SK-N-SH (cell line): ENCODE measurements at regions of chr14 and their contacts with region 1.

Region 1: GRCh38 chr14:24093901-24094761 is at the start of gene PCK2:
- DNase-seq: peak; percentile 97
- H3K4me3 ChIP-seq: peak within 1 kb of the TSS; percentile 80 to 92
- H3K27ac ChIP-seq: peak within 1 kb of the TSS; percentile 73 to 93
- H3K4me1 ChIP-seq: peaks cover 12 to 19% of the 10 kb centered on the region in 2 experiments; a peak in 2 of 4 replicates
- H3K27me3 ChIP-seq: no peaks in the 10 kb centered on the region
- CTCF ChIP-seq: 0 out of 2 replicates have a peak, but pooled peaks have one; percentile 6
- EP300 ChIP-seq: 0 out of 4 replicates have a peak, but pooled peaks of 1 of the 2 experiments have one; percentile 10
- RAD21 ChIP-seq: no peak
- polyA plus RNA-seq, gene PCK2: 16.2 and 16.6 TPM in 2 replicates

Region 2: GRCh38 chr14:24051789-24052655 is 42.1 kb before region 1 on chr14 and contains the start of gene CARMIL3:
- CTCF ChIA-PET with region 1: interaction called, 1,159 read pairs
- POLR2A ChIA-PET with region 1: interaction called, 44 read pairs
- DNase-seq: peak; percentile 97
- H3K4me3 ChIP-seq: peak within 1 kb of the TSS; percentile 72 to 80
- H3K27ac ChIP-seq: peak within 1 kb of the TSS in 1 of 2 experiments; percentile 81; a peak in 2 of 4 replicates
- H3K4me1 ChIP-seq: peaks cover 0 to 18% of the 10 kb centered on the region in 2 experiments; a peak in 1 of 4 replicates
- H3K27me3 ChIP-seq: no peaks in the 10 kb centered on the region; the same call in 1 of the 2 replicates
- CTCF ChIP-seq: no peak
- EP300 ChIP-seq: no peak
- RAD21 ChIP-seq: no peak
- polyA plus RNA-seq, gene CARMIL3: 0.32 and 0.43 TPM in 2 replicates

Region 3: DNA sequence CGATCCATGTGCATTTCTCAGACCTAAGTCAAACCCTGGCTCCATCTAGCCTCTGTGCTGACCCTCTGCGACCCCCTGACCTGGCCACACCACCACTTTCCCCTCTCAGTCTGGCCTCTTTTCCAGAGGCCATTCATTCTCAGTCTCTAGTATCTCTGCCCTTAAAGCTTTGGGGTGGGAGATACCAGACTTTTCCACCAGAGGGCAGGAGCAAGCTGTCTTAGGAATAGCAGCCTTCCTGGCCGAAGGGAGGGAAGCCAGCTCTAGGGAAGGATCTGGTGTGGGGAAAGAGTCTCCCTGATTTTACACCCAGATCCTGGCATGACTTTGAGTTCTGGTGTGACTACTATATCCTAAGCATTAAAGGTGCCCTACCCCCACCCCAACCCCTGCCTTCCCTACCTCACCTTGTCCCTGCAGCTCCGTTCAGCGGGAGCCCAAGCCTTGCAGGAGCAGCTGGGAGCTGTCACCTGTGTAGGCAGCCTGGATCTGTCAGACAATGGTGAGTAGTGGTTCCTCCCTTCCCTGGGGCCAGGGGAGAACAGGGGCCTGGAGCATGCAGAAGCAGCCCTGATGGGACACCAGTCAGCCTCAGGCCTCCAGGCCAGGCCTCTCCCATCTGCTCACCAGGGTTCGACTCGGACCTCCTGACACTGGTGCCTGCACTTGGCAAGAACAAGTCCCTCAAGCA is 35.7 kb before region 1 on chr14:
- CTCF ChIA-PET with region 1: interaction called, 1,159 read pairs
- POLR2A ChIA-PET with region 1: interaction called, 44 read pairs
- DNase-seq: peak; percentile 91
- H3K4me3 ChIP-seq: no peak overlapping the region; a peak in 1 of 4 replicates
- H3K27ac ChIP-seq: no peak overlapping the region
- H3K4me1 ChIP-seq: peaks cover 0 to 3% of the 10 kb centered on the region in 2 experiments; a peak in 1 of 4 replicates
- H3K27me3 ChIP-seq: no peaks in the 10 kb centered on the region
- CTCF ChIP-seq: peak; percentile 84
- EP300 ChIP-seq: no peak
- RAD21 ChIP-seq: peak; percentile 99

Region 4: DNA sequence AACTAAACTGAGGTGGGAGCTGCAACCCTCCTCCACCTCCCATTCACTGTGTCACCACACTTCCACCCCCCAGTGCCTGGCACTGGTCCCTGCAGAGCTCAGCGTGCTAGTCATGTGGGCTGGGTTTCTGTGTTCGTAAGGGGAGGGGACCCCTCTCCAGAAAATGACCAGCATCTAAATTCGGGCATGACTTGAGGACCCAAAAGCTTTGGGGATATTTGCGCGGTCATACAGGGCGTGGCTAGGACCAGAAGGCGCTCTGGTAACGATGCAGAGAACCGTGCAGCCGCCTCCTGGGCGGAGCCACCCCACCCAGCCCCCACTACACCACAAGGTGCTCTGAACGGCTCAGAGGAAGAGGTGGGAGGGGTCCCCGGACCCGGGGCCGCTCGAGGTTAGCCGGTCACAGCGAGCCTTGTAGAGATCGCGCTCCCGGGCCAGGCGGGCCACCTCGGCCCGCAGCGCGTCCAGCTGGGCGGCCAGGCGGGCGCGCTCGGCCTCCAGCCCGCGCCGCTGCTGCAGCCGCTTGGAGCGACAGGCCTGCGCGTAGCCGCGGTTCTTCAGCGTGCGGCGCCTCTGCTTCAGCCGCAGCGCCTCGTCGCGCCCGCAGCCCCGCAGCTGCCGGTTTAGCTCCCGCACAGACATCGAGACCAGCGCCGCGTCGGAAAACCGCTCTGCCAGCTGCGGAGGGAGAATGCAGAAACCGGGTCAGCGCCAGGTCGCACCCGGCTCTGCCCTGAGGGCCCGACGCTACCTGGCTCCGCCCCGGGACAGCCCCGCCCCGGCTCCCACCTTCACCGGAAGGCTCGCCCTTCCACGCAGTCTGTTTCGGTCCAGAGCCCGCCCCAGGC is 13.0 kb before region 1 on chr14:
- CTCF ChIA-PET with region 1: interaction called, 1,159 read pairs
- POLR2A ChIA-PET with region 1: interaction called, 46 read pairs
- DNase-seq: peak; percentile 85
- H3K4me3 ChIP-seq: peak overlapping the region; percentile 57 to 59
- H3K27ac ChIP-seq: peak overlapping the region in 1 of 2 experiments; percentile 73; a peak in 2 of 4 replicates
- H3K4me1 ChIP-seq: peaks cover 0 to 30% of the 10 kb centered on the region in 2 experiments; a peak in 1 of 4 replicates
- H3K27me3 ChIP-seq: peaks cover 5% of the 10 kb centered on the region; the same call in 1 of the 2 replicates
- CTCF ChIP-seq: no peak
- EP300 ChIP-seq: no peak
- RAD21 ChIP-seq: no peak

Region 5: GRCh38 chr14:24108336-24108874 is 14.3 kb after region 1 on chr14:
- CTCF ChIA-PET with region 1: interaction called, 219 read pairs
- POLR2A ChIA-PET with region 1: interaction called, 26 read pairs
- DNase-seq: no peak
- H3K4me3 ChIP-seq: peak overlapping the region in 1 of 2 experiments; percentile 24; a peak in 1 of 4 replicates
- H3K27ac ChIP-seq: no peak overlapping the region
- H3K4me1 ChIP-seq: peaks cover 0 to 2% of the 10 kb centered on the region in 2 experiments; a peak in 1 of 4 replicates
- H3K27me3 ChIP-seq: no peaks in the 10 kb centered on the region
- CTCF ChIP-seq: no peak
- EP300 ChIP-seq: no peak
- RAD21 ChIP-seq: no peak

Region 6: DNA sequence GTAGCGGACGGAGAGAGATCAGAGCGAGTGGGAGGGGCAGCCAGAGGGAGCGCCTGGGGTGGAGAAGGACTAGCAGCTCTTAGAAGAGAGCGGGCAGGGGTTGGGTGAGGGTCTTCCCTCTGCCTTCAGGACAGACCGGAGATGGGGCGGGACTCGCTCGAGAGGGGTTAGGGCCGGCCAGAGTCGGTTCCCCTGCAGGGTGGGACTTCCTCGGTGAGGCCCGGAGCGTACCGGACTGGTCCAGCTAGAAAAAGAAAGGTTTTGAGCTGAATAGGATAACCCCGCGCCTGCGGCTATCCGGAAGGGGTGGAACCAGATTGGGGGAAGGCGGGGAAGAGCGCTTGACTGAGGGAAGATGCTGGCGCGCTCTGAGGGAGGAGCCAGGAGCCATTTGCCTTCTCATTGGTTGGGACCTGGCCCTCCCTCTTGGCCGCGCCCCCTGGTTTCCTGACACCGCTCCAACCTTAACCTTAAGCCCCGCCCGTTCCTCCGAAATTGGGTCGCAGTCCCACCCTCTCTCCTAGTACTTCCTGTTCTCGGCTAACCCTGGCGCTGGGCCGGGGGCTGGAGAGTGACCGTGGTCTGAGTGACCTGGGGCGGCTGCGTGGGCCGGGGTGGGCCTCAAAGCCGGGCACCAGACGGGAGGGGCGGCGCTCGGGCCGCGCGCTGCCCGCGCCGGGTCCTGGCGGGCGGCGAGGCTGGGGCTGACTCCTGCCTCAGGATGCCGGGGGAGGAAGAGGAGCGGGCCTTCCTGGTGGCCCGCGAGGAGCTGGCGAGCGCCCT is 53.0 kb after region 1 on chr14 and contains the start of gene RNF31:
- CTCF ChIA-PET with region 1: interaction called, 6 read pairs
- POLR2A ChIA-PET with region 1: interaction called, 11 read pairs
- DNase-seq: peak; percentile 96
- H3K4me3 ChIP-seq: peak within 1 kb of the TSS; percentile 93 to 98
- H3K27ac ChIP-seq: peak within 1 kb of the TSS; percentile 92 to 97
- H3K4me1 ChIP-seq: peaks cover 11 to 22% of the 10 kb centered on the region in 2 experiments
- H3K27me3 ChIP-seq: no peaks in the 10 kb centered on the region
- CTCF ChIP-seq: no peak
- EP300 ChIP-seq: no peak
- RAD21 ChIP-seq: no peak
- polyA plus RNA-seq, gene RNF31: 19.2 and 20.4 TPM in 2 replicates